ENCODE measurements at regions of chr12 and their contacts with region 1.

Region 1: DNA sequence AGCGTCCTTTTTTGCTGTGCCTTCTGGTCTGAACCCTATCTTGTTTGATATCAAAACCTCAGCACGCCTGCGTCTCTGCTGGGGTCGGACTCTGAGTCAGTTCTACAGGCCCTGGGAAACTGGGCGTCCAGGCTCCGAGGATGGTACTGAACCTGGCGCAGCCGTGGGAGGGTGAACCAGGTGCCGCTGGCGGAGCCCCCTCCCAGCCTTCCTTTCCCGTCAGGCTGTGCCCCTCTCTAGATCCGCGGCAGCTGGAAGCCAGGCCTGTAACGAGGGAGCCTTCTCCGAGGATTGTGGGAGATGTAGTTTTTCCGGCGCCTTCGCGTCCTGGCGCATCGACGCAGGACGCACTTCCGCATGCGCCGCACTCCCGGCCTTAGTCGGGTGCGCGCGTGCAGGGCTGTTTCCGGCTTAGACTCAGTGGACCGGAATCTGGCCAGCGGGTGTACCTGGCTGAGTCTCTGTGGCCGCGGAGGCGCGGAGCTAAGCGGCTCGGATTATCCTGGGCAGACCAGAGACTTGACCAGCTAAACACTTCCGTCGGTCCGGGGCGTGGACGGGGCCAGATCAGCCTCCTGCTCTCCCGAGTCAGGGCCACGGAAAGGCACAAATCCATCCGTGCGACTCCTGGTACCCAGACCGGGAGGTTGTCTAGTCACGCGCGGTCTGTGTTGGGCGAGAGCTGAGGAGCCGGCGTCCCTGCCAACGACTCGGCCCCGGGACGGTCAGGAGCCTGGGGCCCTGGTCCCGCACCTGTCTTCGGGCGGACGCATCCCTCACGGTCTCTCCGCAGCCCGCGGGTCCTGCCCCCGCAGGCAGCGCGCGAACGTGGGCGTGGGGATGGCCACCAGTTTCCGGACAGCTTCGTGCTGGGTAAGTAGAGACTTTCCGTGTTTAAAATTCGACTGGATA is at the start of gene ZNF26:
- DNase-seq: peak; percentile 91
- H3K4me3 Mint-ChIP-seq: peak within 1 kb of the TSS; percentile 87
- H3K27ac Mint-ChIP-seq: peak within 1 kb of the TSS; percentile 94
- H3K4me1 Mint-ChIP-seq: peaks cover 9% of the 10 kb centered on the region
- H3K27me3 Mint-ChIP-seq: no peaks in the 10 kb centered on the region
- CTCF ChIP-seq: no peak
- total RNA-seq, gene ZNF26: 18.5 and 18.7 TPM in 2 replicates

Region 2: DNA sequence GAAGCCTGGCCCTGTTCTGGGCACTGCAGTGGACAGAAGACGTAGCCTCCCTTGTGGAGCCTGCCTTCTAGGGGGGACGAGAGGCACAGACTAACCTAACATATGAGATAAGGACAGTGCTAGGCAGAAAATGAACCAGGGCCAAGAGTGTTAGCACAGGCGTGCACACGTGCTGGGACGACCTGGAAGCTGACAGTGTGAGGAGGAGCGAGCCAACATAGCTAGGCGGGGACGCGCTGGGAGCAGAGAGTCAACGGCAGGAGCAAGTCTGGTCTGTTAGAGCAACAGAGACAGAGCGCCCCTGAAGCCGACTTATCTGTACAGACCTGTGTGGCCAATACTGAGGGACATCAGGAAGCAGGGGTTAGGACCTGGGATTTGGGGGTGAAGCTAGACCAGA is 290.8 kb before region 1 on chr12:
- CTCF ChIA-PET with region 1: no interaction called
- POLR2A ChIA-PET with region 1: no interaction called
- intact Hi-C with region 1: no loop called
- DNase-seq: no peak
- H3K4me3 Mint-ChIP-seq: no peak overlapping the region
- H3K27ac Mint-ChIP-seq: no peak overlapping the region
- H3K4me1 Mint-ChIP-seq: no peaks in the 10 kb centered on the region
- H3K27me3 Mint-ChIP-seq: no peaks in the 10 kb centered on the region
- CTCF ChIP-seq: no peak

Region 3: GRCh38 chr12:132828706-132829534 is 157.3 kb before region 1 on chr12 and contains the start of gene GOLGA3:
- CTCF ChIA-PET with region 1: interaction called, 3 read pairs
- POLR2A ChIA-PET with region 1: interaction called, 11 read pairs
- intact Hi-C with region 1: no loop called
- DNase-seq: peak; percentile 91
- H3K4me3 Mint-ChIP-seq: peak within 1 kb of the TSS; percentile 94
- H3K27ac Mint-ChIP-seq: peak within 1 kb of the TSS; percentile 100
- H3K4me1 Mint-ChIP-seq: peaks cover 10% of the 10 kb centered on the region
- H3K27me3 Mint-ChIP-seq: no peaks in the 10 kb centered on the region
- CTCF ChIP-seq: no peak
- total RNA-seq, gene GOLGA3: 94.9 and 116 TPM in 2 replicates

Region 4: GRCh38 chr12:132967736-132968135 is 18.5 kb before region 1 on chr12:
- CTCF ChIA-PET with region 1: interaction called, 3 read pairs
- POLR2A ChIA-PET with region 1: interaction called, 11 read pairs
- intact Hi-C with region 1: no loop called
- DNase-seq: no peak
- H3K4me3 Mint-ChIP-seq: no peak overlapping the region
- H3K27ac Mint-ChIP-seq: no peak overlapping the region
- H3K4me1 Mint-ChIP-seq: no peaks in the 10 kb centered on the region
- H3K27me3 Mint-ChIP-seq: no peaks in the 10 kb centered on the region
- CTCF ChIP-seq: no peak

Region 5: GRCh38 chr12:132998741-132999140 is 12.5 kb after region 1 on chr12:
- CTCF ChIA-PET with region 1: interaction called, 3 read pairs
- POLR2A ChIA-PET with region 1: interaction called, 10 read pairs
- intact Hi-C with region 1: no loop called
- DNase-seq: no peak
- H3K4me3 Mint-ChIP-seq: no peak overlapping the region
- H3K27ac Mint-ChIP-seq: no peak overlapping the region
- H3K4me1 Mint-ChIP-seq: no peaks in the 10 kb centered on the region
- H3K27me3 Mint-ChIP-seq: no peaks in the 10 kb centered on the region
- CTCF ChIP-seq: no peak

Region 6: GRCh38 chr12:133037207-133038005 is 51.1 kb after region 1 on chr12 and contains the start of gene ZNF84:
- CTCF ChIA-PET with region 1: interaction called, 3 read pairs
- POLR2A ChIA-PET with region 1: interaction called, 18 read pairs
- intact Hi-C with region 1: loop called (anchors 2 kb)
- DNase-seq: peak; percentile 98
- H3K4me3 Mint-ChIP-seq: peak within 1 kb of the TSS; percentile 87
- H3K27ac Mint-ChIP-seq: peak within 1 kb of the TSS; percentile 93
- H3K4me1 Mint-ChIP-seq: no peaks in the 10 kb centered on the region
- H3K27me3 Mint-ChIP-seq: no peaks in the 10 kb centered on the region
- CTCF ChIP-seq: no peak
- total RNA-seq, gene ZNF84: 24.4 and 30.3 TPM in 2 replicates

Region 7: GRCh38 chr12:133135747-133136146 is 149.5 kb after region 1 on chr12:
- CTCF ChIA-PET with region 1: no interaction called
- POLR2A ChIA-PET with region 1: no interaction called
- intact Hi-C with region 1: no loop called
- DNase-seq: no peak
- H3K4me3 Mint-ChIP-seq: no peak overlapping the region
- H3K27ac Mint-ChIP-seq: no peak overlapping the region
- H3K4me1 Mint-ChIP-seq: peaks cover 6% of the 10 kb centered on the region
- H3K27me3 Mint-ChIP-seq: no peaks in the 10 kb centered on the region
- CTCF ChIP-seq: no peak

Region 8: GRCh38 chr12:133181238-133181959 is 195.1 kb after region 1 on chr12 and contains the start of gene ZNF268:
- CTCF ChIA-PET with region 1: no interaction called
- POLR2A ChIA-PET with region 1: interaction called, 23 read pairs
- intact Hi-C with region 1: loop called (anchors 1 kb)
- DNase-seq: peak; percentile 92
- H3K4me3 Mint-ChIP-seq: peak within 1 kb of the TSS; percentile 90
- H3K27ac Mint-ChIP-seq: peak within 1 kb of the TSS; percentile 82
- H3K4me1 Mint-ChIP-seq: no peaks in the 10 kb centered on the region
- H3K27me3 Mint-ChIP-seq: no peaks in the 10 kb centered on the region
- CTCF ChIP-seq: peak; percentile 85
- total RNA-seq, gene ZNF268: 23.4 and 26.6 TPM in 2 replicates